RWPE1 (cell line): ENCODE measurements at regions of chr1 and their contacts with region 1.

Region 1: DNA sequence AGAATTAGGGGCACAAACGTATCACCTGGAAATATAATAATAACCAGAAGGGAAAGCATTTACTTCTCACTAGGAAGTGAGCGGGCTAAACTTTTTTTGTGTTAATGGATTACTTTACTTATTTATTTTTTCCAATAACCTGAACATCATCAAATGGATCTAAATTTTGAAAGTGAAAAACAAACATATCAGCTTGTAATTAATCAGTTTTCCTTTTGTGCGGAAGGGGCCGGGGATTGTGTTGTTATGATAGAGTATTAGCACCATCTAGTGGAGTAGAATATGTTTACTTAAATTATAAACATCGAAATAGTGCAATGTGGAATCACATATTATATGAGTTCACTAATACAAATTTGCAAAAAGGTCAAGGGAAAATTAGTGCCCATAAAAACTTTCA is 9.0 kb downstream of the CFH start:
- DNase-seq: peak; percentile 79
- H3K27ac ChIP-seq: no peak overlapping the region
- CTCF ChIP-seq: peak; percentile 39

Region 2: DNA sequence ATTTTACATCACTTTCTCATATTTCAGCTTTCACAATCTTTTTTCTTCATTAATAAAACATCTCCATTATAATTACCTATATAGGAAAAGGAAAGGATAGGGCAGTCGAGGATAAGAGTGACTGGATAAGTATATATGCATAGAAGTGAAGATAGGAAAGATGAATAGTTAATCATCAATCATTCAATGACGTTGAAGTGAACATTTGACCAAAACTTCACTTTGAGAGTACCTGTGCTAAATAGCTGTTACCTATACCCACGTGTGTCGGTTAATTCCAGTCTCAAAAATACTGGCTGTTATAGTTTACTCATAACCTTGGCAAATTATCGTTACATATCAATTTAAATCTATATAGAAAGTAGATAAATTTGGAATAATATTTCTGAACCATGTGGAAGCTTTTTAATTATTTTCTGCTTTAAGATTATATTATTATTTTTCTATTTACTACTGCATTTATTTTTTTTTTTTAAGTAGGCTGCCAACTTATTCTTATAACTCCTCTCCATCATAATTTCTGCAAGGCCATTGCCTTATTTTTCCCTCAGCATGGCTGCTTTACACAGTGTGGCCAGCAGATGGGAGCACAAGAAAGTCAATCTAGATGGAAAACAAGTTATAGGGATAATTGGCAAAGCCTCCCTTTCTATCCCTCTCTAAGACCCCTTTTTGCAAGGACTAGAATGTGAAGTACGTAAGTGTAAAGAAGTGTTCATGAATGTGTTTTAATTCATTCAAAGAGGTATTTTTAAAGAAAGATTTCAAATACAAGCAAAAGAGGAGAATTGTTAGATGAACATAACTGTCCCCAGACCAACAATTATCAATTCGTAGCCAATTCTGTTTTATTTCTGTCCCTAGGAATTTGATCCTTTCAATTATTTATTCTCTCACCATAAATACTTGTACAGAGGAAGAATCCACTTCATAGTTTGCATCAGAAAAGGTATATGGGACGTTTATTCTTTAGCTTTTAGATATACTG is 343.0 kb before region 1 on chr1:
- CTCF ChIA-PET with region 1: interaction called, 12 read pairs
- POLR2A ChIA-PET with region 1: no interaction called
- DNase-seq: peak; percentile 57
- H3K27ac ChIP-seq: no peak overlapping the region
- CTCF ChIP-seq: peak; percentile 72

Region 3: GRCh38 chr1:196355206-196355786 is 305.6 kb before region 1 on chr1:
- CTCF ChIA-PET with region 1: interaction called, 35 read pairs
- POLR2A ChIA-PET with region 1: no interaction called
- DNase-seq: peak; percentile 43
- H3K27ac ChIP-seq: no peak overlapping the region
- CTCF ChIP-seq: peak; percentile 56